ENCODE measurements at regions of chr16 and their contacts with region 1.

Region 1: DNA sequence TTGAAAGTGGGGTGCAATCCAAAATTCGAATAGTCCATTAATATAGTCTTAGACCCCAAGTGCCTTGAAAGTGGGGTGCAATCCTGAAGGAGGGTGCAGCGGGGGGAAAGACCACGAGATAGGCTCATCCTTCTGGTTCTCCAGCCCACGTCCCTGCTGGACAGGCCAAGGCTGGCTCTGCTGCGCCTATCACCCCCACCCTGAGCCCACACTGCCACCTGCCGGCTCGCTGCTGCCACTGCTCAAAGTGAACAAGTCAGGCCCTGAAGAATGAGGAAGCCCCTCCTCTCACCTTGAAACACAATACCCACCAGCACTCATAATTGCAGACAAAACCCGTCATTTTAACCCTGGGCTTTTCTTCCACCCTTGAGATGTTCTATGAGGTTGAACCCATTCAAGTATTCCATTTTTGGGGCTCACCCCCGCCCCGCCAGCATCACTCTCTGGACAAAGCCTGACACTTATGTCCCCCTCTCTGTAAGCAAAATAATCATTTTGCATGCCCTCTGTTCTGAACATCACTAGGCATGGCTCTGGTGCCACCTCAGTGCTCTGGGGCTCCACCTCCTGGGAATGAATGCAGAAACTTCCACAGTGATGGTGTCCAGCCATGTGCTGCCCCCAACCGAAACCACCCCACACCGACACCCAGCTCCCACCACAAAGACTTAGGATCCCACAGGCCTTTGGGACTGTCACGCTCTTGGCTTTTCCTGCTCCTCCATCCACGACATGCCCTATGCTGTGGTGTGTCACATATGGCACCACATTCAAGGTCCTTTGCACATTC is 56.8 kb downstream of the BEAN1 start:
- DNase-seq: peak; percentile 69
- ATAC-seq: peak; percentile 81
- H3K4me3 ChIP-seq: no peak overlapping the region
- H3K27ac ChIP-seq: no peak overlapping the region
- H3K4me1 ChIP-seq: peaks cover 22% of the 10 kb centered on the region
- H3K27me3 ChIP-seq: peaks cover 5 to 28% of the 10 kb centered on the region in 2 experiments
- CTCF ChIP-seq: peak; percentile 98
- EP300 ChIP-seq: no peak
- POLR2A ChIP-seq: no peak
- RAD21 ChIP-seq: peak; percentile 97

Region 2: DNA sequence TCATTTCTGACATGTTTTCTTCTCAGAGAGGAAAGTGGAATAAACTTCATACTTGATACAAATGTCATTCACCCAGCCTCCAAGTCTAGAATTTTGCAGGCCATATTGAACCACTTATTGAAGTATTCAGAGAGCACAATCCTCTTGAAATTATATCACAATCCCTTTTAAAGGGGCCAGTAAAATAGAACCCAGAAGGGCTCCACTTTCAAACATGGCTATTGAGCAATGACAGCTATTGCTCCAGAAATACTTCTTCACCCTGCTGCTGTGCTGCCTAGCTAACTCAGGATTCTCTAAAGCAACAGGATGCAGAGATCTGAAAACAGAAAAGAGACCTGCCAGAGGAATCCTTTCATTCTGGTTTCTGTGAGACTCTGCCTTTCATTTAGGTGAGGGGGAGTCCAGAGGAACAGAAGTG is 392.4 kb before region 1 on chr16:
- CTCF ChIA-PET with region 1: no interaction called
- POLR2A ChIA-PET with region 1: no interaction called
- in situ Hi-C with region 1: no loop called
- intact Hi-C with region 1: no loop called
- DNase-seq: no peak
- ATAC-seq: no peak
- H3K4me3 ChIP-seq: no peak overlapping the region
- H3K27ac ChIP-seq: no peak overlapping the region
- H3K4me1 ChIP-seq: no peaks in the 10 kb centered on the region
- H3K27me3 ChIP-seq: no peaks in the 10 kb centered on the region
- CTCF ChIP-seq: no peak
- EP300 ChIP-seq: no peak
- POLR2A ChIP-seq: no peak
- RAD21 ChIP-seq: no peak

Region 3: GRCh38 chr16:66357153-66357928 is 126.5 kb before region 1 on chr16:
- CTCF ChIA-PET with region 1: interaction called, 12 read pairs
- POLR2A ChIA-PET with region 1: no interaction called
- in situ Hi-C with region 1: no loop called
- intact Hi-C with region 1: loop called (anchors 1 kb)
- DNase-seq: peak; percentile 61
- ATAC-seq: peak; percentile 71
- H3K4me3 ChIP-seq: no peak overlapping the region
- H3K27ac ChIP-seq: no peak overlapping the region
- H3K4me1 ChIP-seq: peaks cover 18% of the 10 kb centered on the region
- H3K27me3 ChIP-seq: peaks cover 5 to 50% of the 10 kb centered on the region in 2 experiments; a peak in 4 of 5 replicates
- CTCF ChIP-seq: peak; percentile 79
- EP300 ChIP-seq: no peak
- POLR2A ChIP-seq: no peak
- RAD21 ChIP-seq: no peak; the same call in 1 of the 2 replicates

Region 4: GRCh38 chr16:66406534-66407221 is 77.2 kb before region 1 on chr16:
- CTCF ChIA-PET with region 1: interaction called, 121 read pairs
- POLR2A ChIA-PET with region 1: interaction called, 5 read pairs
- in situ Hi-C with region 1: loop called (anchors 5 kb)
- intact Hi-C with region 1: loop called (anchors 1 kb)
- DNase-seq: peak; percentile 73
- ATAC-seq: peak; percentile 84
- H3K4me3 ChIP-seq: peak overlapping the region; percentile 47 to 76 (median 50)
- H3K27ac ChIP-seq: peak overlapping the region; percentile 94
- H3K4me1 ChIP-seq: peaks cover 50% of the 10 kb centered on the region
- H3K27me3 ChIP-seq: no peaks in the 10 kb centered on the region
- CTCF ChIP-seq: peak; percentile 99
- EP300 ChIP-seq: no peak; a peak in 1 of 4 replicates
- POLR2A ChIP-seq: 0 out of 4 replicates have a peak, but pooled peaks of 1 of the 2 experiments have one; percentile 44
- RAD21 ChIP-seq: peak; percentile 99

Region 5: GRCh38 chr16:66434619-66435430 is 49.1 kb before region 1 on chr16:
- CTCF ChIA-PET with region 1: no interaction called
- POLR2A ChIA-PET with region 1: no interaction called
- in situ Hi-C with region 1: no loop called
- intact Hi-C with region 1: loop called (anchors 2 kb)
- DNase-seq: peak; percentile 92
- ATAC-seq: peak; percentile 80
- H3K4me3 ChIP-seq: peak overlapping the region in 2 of 3 experiments; percentile 0 to 47; a peak in 2 of 6 replicates
- H3K27ac ChIP-seq: peak overlapping the region; percentile 85
- H3K4me1 ChIP-seq: peaks cover 53% of the 10 kb centered on the region
- H3K27me3 ChIP-seq: no peaks in the 10 kb centered on the region
- CTCF ChIP-seq: peak; percentile 17; the same call in 1 of the 2 replicates
- EP300 ChIP-seq: peak; percentile 40 to 62; a peak in 3 of 4 replicates
- POLR2A ChIP-seq: 0 out of 4 replicates have a peak, but pooled peaks of 1 of the 2 experiments have one; percentile 40
- RAD21 ChIP-seq: no peak

Region 6: DNA sequence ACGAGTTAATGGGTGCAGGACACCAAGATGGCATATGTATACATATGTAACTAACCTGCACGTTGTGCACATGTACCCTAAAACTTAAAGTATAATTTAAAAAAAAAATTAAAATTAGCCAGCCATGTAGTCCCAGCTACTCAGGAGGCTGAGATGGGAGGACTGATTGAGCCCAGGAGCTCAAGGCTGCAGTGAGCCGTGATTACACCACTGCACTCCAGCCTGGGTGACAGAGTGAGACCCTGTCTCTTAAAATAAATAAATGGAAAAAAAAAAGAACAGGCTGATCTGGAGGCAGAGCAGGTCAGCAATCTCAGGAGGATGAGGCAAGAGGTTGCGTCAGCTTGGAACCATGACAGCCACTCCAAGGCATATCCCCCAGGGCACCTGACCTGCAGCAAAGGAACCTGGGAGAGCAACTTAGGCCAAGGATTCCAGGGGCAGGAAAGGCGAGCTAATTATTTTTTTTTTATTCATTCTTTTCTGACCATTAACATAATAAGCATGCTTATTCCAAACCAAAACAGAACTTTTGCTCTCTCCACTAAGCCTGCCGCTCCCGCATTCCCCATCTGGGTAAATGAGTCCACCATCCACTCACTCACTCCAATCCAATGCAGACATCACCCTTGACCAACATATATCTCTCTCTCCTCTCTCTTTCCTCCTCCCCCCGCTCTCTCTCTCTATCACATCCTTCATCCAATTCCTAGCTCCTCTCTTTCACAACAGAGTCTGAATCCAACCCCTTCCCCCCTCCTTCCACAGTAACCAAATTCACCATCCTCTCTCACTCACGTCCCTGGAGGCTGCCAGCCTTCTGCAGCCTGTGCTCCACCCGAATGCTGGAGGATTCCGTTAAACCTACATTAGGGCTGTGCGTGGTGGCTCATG is 18.4 kb after region 1 on chr16:
- CTCF ChIA-PET with region 1: no interaction called
- POLR2A ChIA-PET with region 1: no interaction called
- in situ Hi-C with region 1: no loop called
- intact Hi-C with region 1: no loop called
- DNase-seq: peak; percentile 47
- ATAC-seq: peak; percentile 79
- H3K4me3 ChIP-seq: no peak overlapping the region
- H3K27ac ChIP-seq: no peak overlapping the region
- H3K4me1 ChIP-seq: peaks cover 15% of the 10 kb centered on the region
- H3K27me3 ChIP-seq: no peaks in the 10 kb centered on the region
- CTCF ChIP-seq: no peak
- EP300 ChIP-seq: no peak
- POLR2A ChIP-seq: no peak
- RAD21 ChIP-seq: no peak

Region 7: GRCh38 chr16:66516808-66517585 is 33.1 kb after region 1 on chr16:
- CTCF ChIA-PET with region 1: no interaction called
- POLR2A ChIA-PET with region 1: no interaction called
- in situ Hi-C with region 1: no loop called
- intact Hi-C with region 1: loop called (anchors 2 kb)
- DNase-seq: peak; percentile 100
- ATAC-seq: peak; percentile 93
- H3K4me3 ChIP-seq: peak overlapping the region; percentile 35 to 67 (median 43)
- H3K27ac ChIP-seq: peak overlapping the region; percentile 99
- H3K4me1 ChIP-seq: peaks cover 61% of the 10 kb centered on the region
- H3K27me3 ChIP-seq: no peaks in the 10 kb centered on the region
- CTCF ChIP-seq: 0 out of 2 replicates have a peak, but pooled peaks have one; percentile 4
- EP300 ChIP-seq: peak; percentile 65 to 94; a peak in 3 of 4 replicates
- POLR2A ChIP-seq: peak; percentile 81 to 94
- RAD21 ChIP-seq: no peak; the same call in none of the 2 replicates

Region 8: DNA sequence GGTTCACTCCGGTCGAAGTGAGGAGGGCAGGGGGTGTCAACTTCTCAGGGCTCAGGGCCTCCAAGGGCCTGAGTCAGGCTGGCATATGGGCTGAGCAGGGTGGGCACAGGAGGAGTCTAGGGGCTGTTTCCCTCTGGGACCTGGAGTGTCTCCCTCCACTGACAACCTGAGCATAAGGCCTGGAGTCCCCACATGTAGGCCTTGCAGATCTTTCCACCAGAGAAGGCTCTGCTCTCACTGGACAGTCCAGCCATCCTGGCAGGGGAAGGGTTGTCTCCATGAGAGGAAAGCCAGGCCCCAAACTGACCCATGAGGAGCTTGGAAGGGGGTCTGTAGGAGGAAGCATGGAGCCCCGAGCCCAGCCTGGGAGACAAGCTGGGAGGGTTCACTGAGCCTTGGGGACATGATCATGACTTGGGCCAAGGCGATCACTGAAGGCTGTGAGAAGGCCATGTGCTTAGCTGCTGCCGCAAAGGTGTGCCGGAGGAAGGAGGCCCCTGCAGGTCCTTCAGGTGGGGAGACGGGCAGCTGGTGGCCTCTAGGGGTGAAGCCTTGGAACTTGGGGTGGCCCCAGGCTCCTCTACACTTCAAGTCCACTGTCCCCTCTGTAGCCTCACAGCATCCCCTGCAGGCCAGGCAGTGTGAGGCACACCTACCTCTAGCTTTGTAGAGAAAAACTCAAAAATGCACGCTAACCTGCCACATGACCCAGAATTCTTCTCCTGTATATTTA is 105.3 kb after region 1 on chr16:
- CTCF ChIA-PET with region 1: no interaction called
- POLR2A ChIA-PET with region 1: no interaction called
- in situ Hi-C with region 1: no loop called
- intact Hi-C with region 1: loop called (anchors 2 kb)
- DNase-seq: peak; percentile 55
- ATAC-seq: peak; percentile 95
- H3K4me3 ChIP-seq: no peak overlapping the region
- H3K27ac ChIP-seq: no peak overlapping the region
- H3K4me1 ChIP-seq: peaks cover 9% of the 10 kb centered on the region; the same call in 1 of the 2 replicates
- H3K27me3 ChIP-seq: peaks cover 3 to 28% of the 10 kb centered on the region in 2 experiments; a peak in 4 of 5 replicates
- CTCF ChIP-seq: peak; percentile 84
- EP300 ChIP-seq: no peak
- POLR2A ChIP-seq: no peak
- RAD21 ChIP-seq: peak; percentile 79